Panc1 (cell line): ENCODE measurements at regions of chr18 and their contacts with region 1.

Region 1: DNA sequence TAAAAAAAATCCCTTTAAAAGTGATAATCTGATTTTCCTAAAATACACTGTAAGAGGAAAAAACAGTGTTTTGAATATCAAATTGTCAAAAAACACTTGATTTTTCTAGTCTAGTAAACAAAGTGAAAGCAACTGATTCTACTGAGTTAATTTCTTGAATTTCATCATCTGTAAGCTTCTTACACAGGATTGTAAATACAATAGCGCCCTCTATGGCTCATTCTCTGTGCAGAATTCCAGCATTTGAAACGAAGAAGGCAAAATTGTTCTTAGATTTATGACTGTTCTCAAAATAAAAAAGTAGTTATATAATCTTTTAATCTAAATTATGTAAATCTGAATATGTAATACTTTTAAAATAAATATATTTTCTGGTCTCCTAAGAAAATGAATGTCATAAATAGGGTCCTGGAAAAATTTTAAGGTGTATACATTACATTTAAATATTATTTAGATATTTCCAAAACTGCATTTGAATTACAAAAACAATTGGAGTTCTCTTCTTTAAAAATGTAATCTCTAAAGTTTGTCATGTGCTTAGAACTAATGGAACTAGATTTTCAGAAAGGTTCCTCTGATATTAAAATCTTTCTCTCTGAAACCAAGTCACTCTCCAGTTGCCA is 176.9 kb upstream of the MC4R start:
- DNase-seq: peak; percentile 50
- ATAC-seq: no peak
- H3K4me3 ChIP-seq: no peak overlapping the region
- H3K27ac ChIP-seq: peak overlapping the region; percentile 59; the same call in 1 of the 2 replicates
- H3K4me1 ChIP-seq: no peaks in the 10 kb centered on the region
- H3K27me3 ChIP-seq: no peaks in the 10 kb centered on the region
- CTCF ChIP-seq: peak; percentile 51; the same call in 1 of the 2 replicates

Region 2: GRCh38 chr18:59402432-59403090 is 1146.9 kb before region 1 on chr18:
- CTCF ChIA-PET with region 1: interaction called, 13 read pairs
- POLR2A ChIA-PET with region 1: no interaction called
- in situ Hi-C with region 1: no loop called
- intact Hi-C with region 1: no loop called
- DNase-seq: peak; percentile 71
- ATAC-seq: peak; percentile 100
- H3K4me3 ChIP-seq: no peak overlapping the region
- H3K27ac ChIP-seq: no peak overlapping the region
- H3K4me1 ChIP-seq: no peaks in the 10 kb centered on the region
- H3K27me3 ChIP-seq: no peaks in the 10 kb centered on the region
- CTCF ChIP-seq: peak; percentile 84

Region 3: DNA sequence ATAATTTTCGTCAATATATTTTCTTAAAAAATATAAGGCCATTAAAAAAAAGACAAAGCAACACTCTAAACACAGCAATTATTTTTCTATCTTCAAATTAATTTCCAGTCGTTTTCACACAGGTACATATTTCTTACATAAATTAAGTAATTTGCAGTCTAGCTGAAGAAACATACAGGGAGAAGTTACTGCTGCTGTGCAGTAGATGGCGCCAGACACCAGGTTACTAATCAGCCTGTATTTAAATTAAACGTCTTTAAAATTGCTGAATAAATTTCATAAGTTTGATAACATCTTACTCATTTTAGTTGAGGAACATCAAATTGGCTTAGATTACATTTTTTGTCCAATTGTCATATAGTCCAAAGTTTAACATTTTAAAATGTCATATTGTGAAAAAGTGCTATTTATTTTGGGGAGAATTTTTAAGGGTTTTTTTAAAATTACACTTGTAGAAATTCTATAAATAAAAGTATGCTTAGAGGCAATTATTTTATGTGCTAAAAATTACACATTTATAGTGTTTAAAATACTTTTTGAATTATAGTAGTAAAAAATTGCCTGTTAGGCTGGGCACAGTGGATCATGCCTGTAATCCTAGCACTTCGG is 561.2 kb before region 1 on chr18:
- CTCF ChIA-PET with region 1: interaction called, 3 read pairs
- POLR2A ChIA-PET with region 1: no interaction called
- in situ Hi-C with region 1: no loop called
- intact Hi-C with region 1: loop called (anchors 2 kb)
- DNase-seq: no peak
- ATAC-seq: no peak
- H3K4me3 ChIP-seq: no peak overlapping the region
- H3K27ac ChIP-seq: no peak overlapping the region
- H3K4me1 ChIP-seq: no peaks in the 10 kb centered on the region
- H3K27me3 ChIP-seq: no peaks in the 10 kb centered on the region
- CTCF ChIP-seq: peak; percentile 75; the same call in 1 of the 2 replicates

Region 4: GRCh38 chr18:59996370-59996966 is 553.0 kb before region 1 on chr18:
- CTCF ChIA-PET with region 1: no interaction called
- POLR2A ChIA-PET with region 1: no interaction called
- in situ Hi-C with region 1: no loop called
- intact Hi-C with region 1: loop called (anchors 2 kb)
- DNase-seq: peak; percentile 41
- ATAC-seq: no peak; the same call in 1 of the 2 replicates
- H3K4me3 ChIP-seq: no peak overlapping the region
- H3K27ac ChIP-seq: no peak overlapping the region
- H3K4me1 ChIP-seq: no peaks in the 10 kb centered on the region
- H3K27me3 ChIP-seq: no peaks in the 10 kb centered on the region
- CTCF ChIP-seq: peak; percentile 51; the same call in 1 of the 2 replicates